Pancreas (tissue), 10 donors: ENCODE measurements at regions of chr9 and their contacts with region 1.

Region 1: GRCh38 chr9:13427587-13427986 is 148.1 kb upstream of the MPDZ start:
- DNase-seq: no peak
- ATAC-seq: peak in 3 of 4 donors; percentile 59 to 69 (median 65)
- H3K4me3 ChIP-seq: no peak overlapping the region
- H3K27ac ChIP-seq: no peak overlapping the region
- H3K4me1 ChIP-seq: no peaks in the 10 kb centered on the region
- H3K27me3 ChIP-seq: peaks cover 0 to 7% (median 3%) of the 10 kb centered on the region in 4 donors
- CTCF ChIP-seq: peak; percentile 43 to 70 (median 56)

Region 2: GRCh38 chr9:14428781-14429230 is 1001.2 kb after region 1 on chr9:
- intact Hi-C with region 1: loop called in 1 of 3 experiments (anchors 10 kb)
- DNase-seq: peak in 5 of 6 donors; percentile 30 to 79 (median 49)
- ATAC-seq: peak; percentile 43 to 79 (median 71)
- H3K4me3 ChIP-seq: no peak overlapping the region
- H3K27ac ChIP-seq: no peak overlapping the region
- H3K4me1 ChIP-seq: peaks cover 0 to 8% (median 0%) of the 10 kb centered on the region in 3 donors
- H3K27me3 ChIP-seq: no peaks in the 10 kb centered on the region
- CTCF ChIP-seq: peak; percentile 68 to 76 (median 71)